Calu3 (cell line): ENCODE measurements at regions of chr6 and their contacts with region 1.

Region 1: DNA sequence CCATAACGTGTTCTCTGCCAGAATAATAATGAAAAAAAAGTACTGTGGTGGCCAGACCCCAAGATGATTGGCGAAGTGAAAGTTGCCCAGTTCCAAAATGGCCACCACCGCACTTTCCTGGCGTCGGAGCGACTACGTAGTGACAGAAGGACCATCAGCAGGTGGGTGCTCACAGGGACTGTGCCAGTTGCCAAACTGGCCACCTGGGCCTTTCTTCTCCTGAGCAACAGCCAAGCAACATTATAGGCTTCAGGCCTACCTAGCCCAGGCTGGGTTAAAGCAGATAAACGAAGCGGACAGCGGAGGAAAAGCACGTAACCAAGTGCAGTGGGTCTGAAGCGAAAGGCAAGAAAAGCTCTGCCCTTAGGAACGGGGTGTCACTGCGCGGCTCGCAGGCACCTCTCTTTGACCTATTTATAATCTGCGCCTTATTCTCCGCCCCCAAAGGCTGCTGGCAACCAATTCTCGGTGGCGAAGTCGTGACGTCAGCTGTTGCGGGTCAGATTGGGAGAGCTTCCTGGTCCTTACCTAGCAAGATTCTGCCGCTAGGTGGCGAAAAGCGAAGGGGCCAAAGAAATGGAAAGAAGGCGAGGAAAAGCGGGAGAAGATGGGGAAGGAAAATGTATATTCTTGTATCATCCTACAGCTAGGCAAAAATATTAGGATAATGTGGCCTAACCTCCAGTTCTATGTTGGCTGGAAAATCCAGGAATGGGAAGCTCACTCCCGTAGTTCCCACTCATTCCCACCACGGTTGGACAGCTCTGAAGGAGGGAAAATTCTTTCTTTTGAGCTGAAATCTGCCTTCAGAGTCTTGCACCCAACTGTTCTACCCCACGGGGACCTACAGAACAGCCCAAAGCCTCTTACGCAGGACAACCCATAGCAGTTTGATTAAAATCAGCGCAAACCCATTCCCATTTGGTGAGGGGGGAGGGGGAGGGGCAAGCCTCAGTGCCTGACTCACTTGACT is 6.9 kb upstream of the MOG start:
- DNase-seq: peak; percentile 98
- H3K4me3 Mint-ChIP-seq: peak overlapping the region; percentile 77
- H3K27ac Mint-ChIP-seq: peak overlapping the region; percentile 92
- H3K4me1 Mint-ChIP-seq: no peaks in the 10 kb centered on the region
- H3K27me3 Mint-ChIP-seq: no peaks in the 10 kb centered on the region
- CTCF ChIP-seq: peak; percentile 90

Region 2: GRCh38 chr6:29632789-29633533 is 17.0 kb before region 1 on chr6 and contains the start of gene GABBR1:
- CTCF ChIA-PET with region 1: interaction called, 19 read pairs
- intact Hi-C with region 1: no loop called
- DNase-seq: peak; percentile 90
- H3K4me3 Mint-ChIP-seq: peak within 1 kb of the TSS; percentile 73
- H3K27ac Mint-ChIP-seq: peak within 1 kb of the TSS; percentile 9
- H3K4me1 Mint-ChIP-seq: peaks cover 34% of the 10 kb centered on the region
- H3K27me3 Mint-ChIP-seq: peaks cover 15% of the 10 kb centered on the region
- CTCF ChIP-seq: no peak
- total RNA-seq, gene GABBR1: 35.3 and 42.2 TPM in 2 replicates

Region 3: DNA sequence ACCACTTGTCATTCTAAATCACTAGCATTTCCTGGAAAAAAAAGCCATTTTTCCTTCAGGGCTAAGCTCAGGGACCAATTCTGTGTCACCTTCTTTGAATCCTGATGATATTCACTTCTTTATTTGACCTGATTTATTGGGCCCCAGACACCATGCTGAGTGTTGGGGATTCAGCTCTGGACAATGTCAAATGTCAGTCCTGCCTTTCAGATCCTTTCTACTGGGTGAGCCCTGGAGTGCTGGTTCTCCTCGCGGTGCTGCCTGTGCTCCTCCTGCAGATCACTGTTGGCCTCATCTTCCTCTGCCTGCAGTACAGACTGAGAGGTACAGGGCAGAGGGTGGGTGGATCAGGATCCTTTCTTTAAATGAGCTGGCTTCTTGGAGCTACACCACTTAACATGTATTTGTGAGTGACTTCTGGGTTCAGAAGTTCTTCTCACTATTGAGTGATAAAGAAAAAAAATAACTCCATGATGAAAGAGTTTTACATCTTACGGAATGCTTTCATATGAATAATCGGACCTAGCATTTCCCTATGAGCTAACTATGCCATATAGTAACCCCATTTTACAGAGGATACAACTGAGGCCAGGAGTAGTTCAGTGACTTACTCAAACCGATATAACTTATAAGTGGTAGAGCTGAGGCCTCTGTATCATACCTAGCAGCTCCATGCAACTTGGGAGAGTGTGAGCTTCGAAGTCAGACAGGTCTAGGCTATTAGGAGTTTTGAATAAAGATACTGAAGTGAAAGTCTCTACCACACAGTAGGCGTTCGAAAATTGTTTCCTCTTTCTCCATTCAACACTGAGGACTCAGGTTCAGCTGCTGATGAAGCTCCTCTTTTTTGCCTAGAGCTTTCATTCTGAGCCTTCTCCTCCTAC is 16.2 kb after region 1 on chr6:
- CTCF ChIA-PET with region 1: interaction called, 13 read pairs
- intact Hi-C with region 1: no loop called
- DNase-seq: no peak
- H3K4me3 Mint-ChIP-seq: no peak overlapping the region
- H3K27ac Mint-ChIP-seq: no peak overlapping the region
- H3K4me1 Mint-ChIP-seq: no peaks in the 10 kb centered on the region
- H3K27me3 Mint-ChIP-seq: peaks cover 41% of the 10 kb centered on the region
- CTCF ChIP-seq: no peak

Region 4: DNA sequence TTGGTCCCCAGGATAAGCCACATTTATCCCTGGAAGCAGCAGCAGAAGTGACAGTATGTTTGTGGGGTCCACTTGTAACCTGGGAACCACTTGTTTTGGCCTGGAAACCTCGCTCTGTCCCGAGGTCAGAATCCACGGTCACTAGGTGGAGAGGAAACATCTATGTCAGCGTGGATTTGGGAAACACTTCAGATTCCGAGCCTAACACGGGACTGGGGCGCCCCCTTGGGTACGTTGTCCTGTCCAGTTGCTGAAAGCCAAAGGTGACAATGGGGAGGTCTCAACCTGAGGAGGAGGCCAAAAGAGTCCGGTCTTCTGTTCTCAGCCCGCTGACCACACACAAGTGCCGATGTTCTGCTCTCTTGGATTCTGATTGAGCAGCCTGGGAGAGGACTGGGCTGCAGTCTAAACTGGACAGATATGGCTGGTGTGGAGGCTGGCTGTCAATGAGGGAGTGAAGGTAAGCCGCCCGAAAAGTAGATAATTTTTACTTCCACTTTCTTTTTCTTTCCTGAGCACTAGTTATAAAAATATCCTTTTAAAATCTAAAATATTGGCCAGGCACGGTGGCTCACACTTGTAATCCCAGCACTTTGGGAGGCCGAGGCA is 35.8 kb after region 1 on chr6:
- CTCF ChIA-PET with region 1: interaction called, 9 read pairs
- intact Hi-C with region 1: loop called (anchors 5 kb)
- DNase-seq: peak; percentile 55
- H3K4me3 Mint-ChIP-seq: no peak overlapping the region
- H3K27ac Mint-ChIP-seq: no peak overlapping the region
- H3K4me1 Mint-ChIP-seq: no peaks in the 10 kb centered on the region
- H3K27me3 Mint-ChIP-seq: no peaks in the 10 kb centered on the region
- CTCF ChIP-seq: no peak

Region 5: GRCh38 chr6:29813809-29814208 is 163.8 kb after region 1 on chr6:
- CTCF ChIA-PET with region 1: no interaction called
- intact Hi-C with region 1: no loop called
- DNase-seq: peak; percentile 54
- H3K4me3 Mint-ChIP-seq: no peak overlapping the region
- H3K27ac Mint-ChIP-seq: peak overlapping the region; percentile 46
- H3K4me1 Mint-ChIP-seq: peaks cover 12% of the 10 kb centered on the region
- H3K27me3 Mint-ChIP-seq: peaks cover 29% of the 10 kb centered on the region
- CTCF ChIP-seq: no peak

Region 6: GRCh38 chr6:29834564-29835436 is 184.8 kb after region 1 on chr6:
- CTCF ChIA-PET with region 1: no interaction called
- intact Hi-C with region 1: loop called (anchors 5 kb)
- DNase-seq: peak; percentile 73
- H3K4me3 Mint-ChIP-seq: no peak overlapping the region
- H3K27ac Mint-ChIP-seq: no peak overlapping the region
- H3K4me1 Mint-ChIP-seq: peaks cover 8% of the 10 kb centered on the region
- H3K27me3 Mint-ChIP-seq: peaks cover 81% of the 10 kb centered on the region
- CTCF ChIP-seq: peak; percentile 95

Region 7: GRCh38 chr6:29905286-29905685 is 255.3 kb after region 1 on chr6:
- CTCF ChIA-PET with region 1: no interaction called
- intact Hi-C with region 1: no loop called
- DNase-seq: no peak
- H3K4me3 Mint-ChIP-seq: no peak overlapping the region
- H3K27ac Mint-ChIP-seq: no peak overlapping the region
- H3K4me1 Mint-ChIP-seq: peaks cover 18% of the 10 kb centered on the region
- H3K27me3 Mint-ChIP-seq: no peaks in the 10 kb centered on the region
- CTCF ChIP-seq: no peak

Region 8: DNA sequence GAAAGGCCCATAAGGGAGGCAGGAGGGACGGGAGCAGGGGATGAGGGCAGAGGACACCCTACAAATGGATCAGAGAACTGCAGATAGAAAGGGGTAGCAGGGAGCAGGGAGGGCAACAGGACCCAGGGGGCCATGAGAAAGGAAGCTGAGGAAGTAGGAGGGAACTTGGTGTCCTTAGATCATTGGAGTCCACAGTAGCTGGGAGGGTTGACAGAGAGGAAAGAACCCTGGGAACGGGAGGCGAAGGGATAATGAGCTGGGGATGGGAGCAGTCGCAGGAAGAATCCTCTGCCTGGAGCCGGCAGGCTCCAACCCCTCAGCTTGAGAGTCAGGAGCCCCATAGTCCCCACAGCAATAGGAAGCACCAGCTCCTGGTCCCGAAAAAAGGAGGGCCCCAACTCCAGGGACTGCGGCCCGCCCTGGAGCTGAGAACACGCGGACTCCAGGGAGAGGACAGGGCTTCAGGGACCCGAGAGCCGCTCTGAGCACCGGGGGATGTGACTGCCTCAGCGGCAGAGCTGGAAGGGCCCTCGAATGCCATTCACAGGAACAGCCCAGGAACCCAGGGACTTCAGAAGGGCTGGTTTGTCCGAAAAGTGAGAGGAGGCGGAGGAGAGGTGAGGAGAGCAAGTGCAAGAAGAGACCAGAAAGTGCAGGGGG is 325.0 kb after region 1 on chr6:
- CTCF ChIA-PET with region 1: no interaction called
- intact Hi-C with region 1: no loop called
- DNase-seq: no peak
- H3K4me3 Mint-ChIP-seq: no peak overlapping the region
- H3K27ac Mint-ChIP-seq: no peak overlapping the region
- H3K4me1 Mint-ChIP-seq: peaks cover 9% of the 10 kb centered on the region
- H3K27me3 Mint-ChIP-seq: peaks cover 29% of the 10 kb centered on the region
- CTCF ChIP-seq: no peak